ENCODE measurements at regions of chr10 and their contacts with region 1.

Region 1: DNA sequence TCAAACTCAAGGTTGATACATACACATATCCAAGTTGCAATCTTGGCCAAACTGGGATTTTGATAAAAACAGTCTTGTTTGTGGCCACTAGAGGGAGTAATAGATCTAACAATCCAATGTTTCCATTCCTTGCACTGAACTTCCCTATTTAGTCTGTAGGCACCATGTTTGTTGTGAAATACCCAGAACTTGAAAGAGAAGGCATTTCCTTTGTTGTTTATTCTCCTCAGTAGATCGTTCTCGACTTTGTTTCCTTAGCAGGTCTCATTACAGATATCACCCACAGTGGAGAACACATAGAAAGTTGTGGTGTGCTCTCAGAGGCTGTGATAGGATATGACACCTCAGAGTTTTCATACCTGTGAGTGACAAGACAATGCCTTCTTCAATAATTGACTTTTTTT is 70.3 kb upstream of the MXI1 start:
- DNase-seq: peak in 1 of 2 donors; percentile 79
- ATAC-seq: peak; percentile 74 to 87 (median 81)
- H3K4me3 ChIP-seq: no peak overlapping the region
- H3K4me3 Mint-ChIP-seq: peak overlapping the region; percentile 15
- H3K27ac ChIP-seq: no peak overlapping the region
- H3K27ac Mint-ChIP-seq: peak overlapping the region; percentile 77 to 81
- H3K4me1 ChIP-seq: peaks cover 5% of the 10 kb centered on the region
- H3K4me1 Mint-ChIP-seq: peaks cover 22 to 25% of the 10 kb centered on the region in 2 donors
- H3K27me3 ChIP-seq: no peaks in the 10 kb centered on the region
- H3K27me3 Mint-ChIP-seq: no peaks in the 10 kb centered on the region
- CTCF ChIP-seq: peak; percentile 86

Region 2: DNA sequence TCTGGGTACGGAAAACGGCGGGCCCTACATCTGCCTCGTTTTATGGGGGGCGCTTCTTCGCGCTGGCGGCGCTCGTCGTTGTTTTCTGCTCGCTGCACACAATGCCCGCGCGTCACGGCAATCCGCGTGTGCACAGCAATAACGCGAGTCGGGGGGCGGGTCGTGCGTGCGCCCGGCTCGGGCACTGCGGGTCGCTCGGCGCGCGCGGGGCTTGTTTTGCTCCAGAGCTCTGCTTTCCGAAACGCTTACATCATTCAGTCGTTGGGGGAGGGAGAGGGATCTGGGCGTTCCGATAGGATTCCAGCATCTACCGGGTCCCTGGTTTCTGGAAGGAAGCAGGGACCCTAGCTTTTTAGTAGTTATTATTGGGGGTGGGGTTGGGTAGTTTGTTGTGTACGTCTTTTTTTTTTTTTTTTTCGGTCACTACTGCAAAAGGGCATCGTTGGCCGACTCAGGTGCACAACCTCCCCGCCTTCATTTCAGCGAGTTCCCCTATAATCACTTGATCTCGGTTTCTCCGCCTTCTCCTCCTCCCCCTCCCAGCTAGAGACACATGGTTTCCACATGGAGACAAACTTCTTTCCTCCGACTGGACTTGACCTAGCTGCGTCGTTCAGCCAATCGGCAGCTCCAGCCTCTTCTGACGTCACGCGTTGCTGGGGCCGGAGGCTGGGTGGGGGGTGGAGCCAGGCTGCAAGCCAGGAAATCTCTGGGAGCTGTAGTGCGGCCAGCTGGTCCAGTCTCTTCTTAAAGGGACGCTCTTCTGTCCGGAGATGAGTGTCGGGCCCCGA is 73.7 kb after region 1 on chr10:
- intact Hi-C with region 1: loop called (anchors 5 kb)
- DNase-seq: peak; percentile 88 to 95
- ATAC-seq: peak; percentile 73 to 81 (median 78)
- H3K4me3 ChIP-seq: peak overlapping the region; percentile 57
- H3K4me3 Mint-ChIP-seq: peak overlapping the region; percentile 96
- H3K27ac ChIP-seq: peak overlapping the region; percentile 71
- H3K27ac Mint-ChIP-seq: peak overlapping the region; percentile 63 to 86
- H3K4me1 ChIP-seq: peaks cover 48% of the 10 kb centered on the region
- H3K4me1 Mint-ChIP-seq: peaks cover 54 to 61% of the 10 kb centered on the region in 2 donors
- H3K27me3 ChIP-seq: peaks cover 30% of the 10 kb centered on the region
- H3K27me3 Mint-ChIP-seq: peaks cover 58 to 75% of the 10 kb centered on the region in 2 donors
- CTCF ChIP-seq: no peak

Region 3: DNA sequence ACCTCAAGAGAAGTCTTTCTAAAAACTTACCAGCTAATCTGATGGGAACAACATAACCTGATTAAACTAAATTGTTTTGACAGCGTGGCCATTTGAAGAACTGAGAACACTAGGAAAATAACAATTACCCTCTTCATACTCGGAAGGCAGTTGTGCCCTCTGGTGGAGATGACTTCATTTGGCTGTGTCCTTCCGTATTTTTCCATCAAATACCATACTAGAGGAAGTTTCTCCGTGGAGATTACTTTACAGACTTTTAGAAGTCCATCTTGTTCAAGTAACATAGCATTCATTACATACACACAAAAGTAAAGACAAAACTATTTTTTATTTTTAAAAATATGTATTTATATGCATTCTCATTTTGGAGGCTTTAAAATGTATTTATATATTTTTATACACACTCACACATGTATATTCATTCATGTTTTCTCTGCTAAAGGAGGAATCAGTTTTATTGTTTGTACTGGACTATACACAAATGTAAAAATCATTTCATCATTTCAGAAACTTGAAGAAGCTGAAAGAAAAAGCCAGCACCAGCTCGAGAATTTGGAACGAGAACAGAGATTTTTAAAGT is 142.4 kb after region 1 on chr10:
- intact Hi-C with region 1: loop called (anchors 1 kb)
- DNase-seq: peak in 1 of 2 donors; percentile 81
- ATAC-seq: peak; percentile 68 to 78 (median 72)
- H3K4me3 ChIP-seq: no peak overlapping the region
- H3K4me3 Mint-ChIP-seq: no peak overlapping the region
- H3K27ac ChIP-seq: no peak overlapping the region
- H3K27ac Mint-ChIP-seq: no peak overlapping the region
- H3K4me1 ChIP-seq: peaks cover 3% of the 10 kb centered on the region
- H3K4me1 Mint-ChIP-seq: peaks cover 7% of the 10 kb centered on the region in 2 donors
- H3K27me3 ChIP-seq: peaks cover 12% of the 10 kb centered on the region
- H3K27me3 Mint-ChIP-seq: peaks cover 21 to 42% of the 10 kb centered on the region in 2 donors
- CTCF ChIP-seq: peak; percentile 75

Region 4: GRCh38 chr10:110547139-110547761 is 410.1 kb after region 1 on chr10:
- intact Hi-C with region 1: loop called (anchors 5 kb)
- DNase-seq: peak in 1 of 2 donors; percentile 79
- ATAC-seq: peak; percentile 71 to 91 (median 78)
- H3K4me3 ChIP-seq: no peak overlapping the region
- H3K4me3 Mint-ChIP-seq: no peak overlapping the region
- H3K27ac ChIP-seq: no peak overlapping the region
- H3K27ac Mint-ChIP-seq: no peak overlapping the region
- H3K4me1 ChIP-seq: no peaks in the 10 kb centered on the region
- H3K4me1 Mint-ChIP-seq: peaks cover 4 to 8% of the 10 kb centered on the region in 2 donors
- H3K27me3 ChIP-seq: peaks cover 5% of the 10 kb centered on the region
- H3K27me3 Mint-ChIP-seq: peaks cover 6 to 42% of the 10 kb centered on the region in 2 donors
- CTCF ChIP-seq: peak; percentile 90

Measured in natural killer cell (primary cell).